HEK293 (cell line): ENCODE measurements at regions of chr1 and their contacts with region 1.

Region 1: DNA sequence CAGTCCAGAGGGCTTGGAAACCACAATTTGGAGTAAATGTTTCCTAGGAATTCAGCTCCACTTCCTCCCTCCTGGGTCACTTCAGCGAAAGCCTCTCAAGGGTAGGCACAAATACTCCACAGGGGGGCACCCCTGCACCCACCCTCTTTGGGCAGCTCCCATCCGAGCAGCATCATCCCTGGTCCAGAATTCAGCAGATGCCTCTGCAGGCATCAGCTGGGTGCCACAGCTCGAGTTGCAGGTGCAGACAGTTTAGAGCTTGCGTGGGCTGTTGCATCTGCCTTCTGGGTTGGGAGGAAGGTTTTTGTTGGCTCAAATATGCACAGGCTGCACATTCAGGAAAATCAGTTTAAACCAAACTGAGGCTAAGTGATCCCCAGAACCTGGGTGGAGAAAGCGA is 25.0 kb downstream of the KANK4 start:
- H3K4me3 ChIP-seq: no peak overlapping the region
- H3K27ac ChIP-seq: no peak overlapping the region
- H3K4me1 ChIP-seq: peaks cover 8% of the 10 kb centered on the region
- CTCF ChIP-seq: peak; percentile 67

Region 2: GRCh38 chr1:62003777-62004176 is 290.5 kb before region 1 on chr1:
- CTCF ChIA-PET with region 1: no interaction called
- POLR2A ChIA-PET with region 1: no interaction called
- H3K4me3 ChIP-seq: no peak overlapping the region
- H3K27ac ChIP-seq: no peak overlapping the region
- H3K4me1 ChIP-seq: no peaks in the 10 kb centered on the region
- CTCF ChIP-seq: no peak

Region 3: GRCh38 chr1:62377043-62377562 is 82.8 kb after region 1 on chr1:
- CTCF ChIA-PET with region 1: interaction called, 11 read pairs
- POLR2A ChIA-PET with region 1: no interaction called
- H3K4me3 ChIP-seq: no peak overlapping the region
- H3K27ac ChIP-seq: no peak overlapping the region
- H3K4me1 ChIP-seq: no peaks in the 10 kb centered on the region
- CTCF ChIP-seq: no peak

Region 4: DNA sequence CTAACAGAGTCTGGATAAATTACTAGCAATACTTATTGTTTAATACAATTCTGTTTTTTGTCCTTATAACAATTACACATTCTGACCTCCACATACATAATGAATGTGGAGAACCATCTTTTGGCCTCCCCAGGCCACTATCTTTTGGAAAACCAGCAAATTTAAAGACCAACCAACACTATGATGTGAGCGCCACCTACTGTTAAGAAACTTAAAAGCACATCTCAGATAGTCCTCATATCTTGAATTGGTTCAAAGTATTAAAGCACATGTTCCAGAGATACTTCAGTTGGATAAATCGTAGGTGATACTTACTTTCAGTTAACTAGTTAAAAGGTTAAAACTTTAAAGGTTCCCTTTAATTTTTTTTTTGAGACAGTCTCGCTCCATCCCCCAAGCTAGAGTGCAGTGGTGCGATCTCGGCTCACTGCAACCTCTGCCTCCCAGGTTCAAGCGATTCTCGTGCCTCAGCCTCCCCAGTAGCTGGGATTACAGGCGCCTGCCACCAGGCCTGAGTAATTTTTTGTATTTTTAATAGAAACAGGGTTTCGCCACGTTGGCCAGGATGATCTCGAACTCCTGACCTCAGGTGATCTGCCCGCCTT is 113.2 kb after region 1 on chr1:
- CTCF ChIA-PET with region 1: interaction called, 14 read pairs
- POLR2A ChIA-PET with region 1: no interaction called
- H3K4me3 ChIP-seq: no peak overlapping the region
- H3K27ac ChIP-seq: no peak overlapping the region
- H3K4me1 ChIP-seq: no peaks in the 10 kb centered on the region
- CTCF ChIP-seq: no peak